Left lung (tissue), 14 donors: ENCODE measurements at regions of chr19 and their contacts with region 1.

Region 1: GRCh38 chr19:16259385-16260159 is 61.9 kb downstream of the AP1M1 start:
- DNase-seq: no peak
- ATAC-seq: peak; percentile 12
- H3K4me3 ChIP-seq: no peak overlapping the region
- H3K27ac ChIP-seq: peak overlapping the region in 1 of 2 donors; percentile 82
- H3K4me1 ChIP-seq: peaks cover 11 to 41% of the 10 kb centered on the region in 2 donors
- H3K27me3 ChIP-seq: peaks cover 0 to 9% of the 10 kb centered on the region in 2 donors
- CTCF ChIP-seq: no peak

Region 2: GRCh38 chr19:16324384-16325160 is 65.0 kb after region 1 on chr19 and contains the start of gene KLF2:
- intact Hi-C with region 1: loop called in 1 of 2 experiments (anchors 10 kb)
- DNase-seq: peak; percentile 89 to 99 (median 95)
- ATAC-seq: peak; percentile 84
- H3K4me3 ChIP-seq: peak within 1 kb of the TSS; percentile 72 to 77
- H3K27ac ChIP-seq: peak within 1 kb of the TSS; percentile 91 to 98
- H3K4me1 ChIP-seq: peaks cover 13 to 44% of the 10 kb centered on the region in 2 donors
- H3K27me3 ChIP-seq: no peaks in the 10 kb centered on the region
- CTCF ChIP-seq: no peak
- polyA plus RNA-seq, gene KLF2: 12.9 to 69.1 (median 37.6) TPM

Region 3: DNA sequence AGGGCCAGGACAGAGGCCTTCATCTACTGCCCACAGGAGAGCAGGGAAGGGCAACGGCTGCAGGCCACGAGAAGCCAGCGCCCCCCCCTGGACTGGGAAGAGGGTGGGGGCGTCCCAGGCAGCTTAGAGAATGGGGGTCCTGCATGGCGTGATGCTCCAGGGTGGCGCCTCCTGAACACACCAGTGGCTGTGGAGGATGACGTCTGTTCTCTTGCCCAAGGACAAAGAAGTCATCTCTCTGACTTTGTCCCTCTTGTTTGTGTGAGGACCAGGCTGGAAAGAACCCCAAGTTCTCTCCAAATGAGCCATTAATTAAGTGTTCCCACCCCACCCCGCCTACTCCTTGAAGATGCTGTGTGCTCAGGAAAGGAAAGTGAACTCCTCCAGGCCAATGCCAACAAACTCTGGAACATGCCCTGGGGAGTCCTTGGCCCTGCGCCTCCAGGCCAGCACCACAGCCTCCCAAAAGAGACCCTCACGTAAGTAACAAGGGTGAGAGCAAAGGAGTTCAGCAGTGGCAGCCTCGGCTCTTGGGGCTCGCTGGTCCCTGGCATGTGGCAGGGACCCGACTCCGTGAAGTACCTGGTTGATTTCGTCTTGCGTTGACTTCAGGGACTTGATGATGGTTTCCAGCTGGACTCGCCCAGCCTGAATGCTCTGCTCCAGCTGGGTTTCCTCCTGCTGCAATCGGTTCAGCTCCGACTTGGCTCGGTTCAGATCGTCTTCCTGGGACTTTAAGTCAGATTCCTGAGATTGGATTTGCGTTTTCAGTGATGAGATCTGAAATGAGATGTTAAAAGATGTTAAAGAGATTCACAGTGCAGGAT is 143.8 kb after region 1 on chr19:
- intact Hi-C with region 1: no loop called
- DNase-seq: peak in 1 of 4 donors; percentile 48
- ATAC-seq: no peak
- H3K4me3 ChIP-seq: no peak overlapping the region
- H3K27ac ChIP-seq: peak overlapping the region in 1 of 2 donors; percentile 9
- H3K4me1 ChIP-seq: peaks cover 0 to 17% of the 10 kb centered on the region in 2 donors
- H3K27me3 ChIP-seq: no peaks in the 10 kb centered on the region
- CTCF ChIP-seq: no peak